HepG2 (cell line): ENCODE measurements at regions of chr14 and their contacts with region 1.

Region 1: DNA sequence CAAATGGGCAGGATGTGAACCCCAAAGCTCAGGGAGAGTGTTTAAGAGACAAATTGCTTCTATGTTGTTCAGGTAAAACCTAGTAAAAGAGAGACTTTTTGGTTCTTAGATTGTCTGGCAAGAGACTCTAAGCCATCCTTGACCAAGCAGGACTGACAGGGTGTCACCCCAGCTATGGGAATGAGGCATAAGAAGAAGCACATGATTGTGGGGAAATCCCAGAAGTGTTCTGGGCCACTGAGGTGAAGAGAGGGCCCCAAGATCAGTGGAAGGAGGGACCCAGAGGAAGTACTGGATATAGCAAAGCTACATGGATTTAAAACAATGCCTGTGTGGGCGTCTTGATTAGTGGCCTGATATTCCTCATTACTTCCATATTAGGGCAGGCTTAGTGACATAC is 99.0 kb downstream of the SAMD4A start:
- DNase-seq: no peak
- ATAC-seq: no peak
- H3K4me3 ChIP-seq: no peak overlapping the region
- H3K27ac ChIP-seq: no peak overlapping the region
- H3K4me1 ChIP-seq: peaks cover 66% of the 10 kb centered on the region
- H3K27me3 ChIP-seq: no peaks in the 10 kb centered on the region
- CTCF ChIP-seq: no peak
- EP300 ChIP-seq: no peak
- POLR2A ChIP-seq: no peak
- RAD21 ChIP-seq: no peak

Region 2: DNA sequence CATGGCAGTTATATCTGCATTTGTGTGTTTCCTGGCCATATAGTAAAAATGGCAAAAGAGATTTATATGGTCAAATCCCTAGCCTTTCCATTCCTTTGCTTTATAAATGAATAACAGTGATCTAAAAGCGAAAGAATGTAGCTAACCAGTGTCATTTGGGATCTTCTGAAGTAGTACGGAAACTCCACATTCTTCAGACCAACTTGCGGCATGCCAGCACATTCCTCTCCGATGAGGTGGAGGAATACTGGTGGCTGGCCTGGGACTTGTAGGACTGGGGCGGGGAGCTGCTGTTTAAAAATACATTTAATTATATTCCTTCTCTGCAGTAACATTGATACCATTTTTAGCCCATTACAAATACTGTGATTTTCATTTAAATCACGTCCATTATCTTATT is 13.8 kb before region 1 on chr14:
- CTCF ChIA-PET with region 1: no interaction called
- POLR2A ChIA-PET with region 1: no interaction called
- in situ Hi-C with region 1: no loop called
- intact Hi-C with region 1: loop called (anchors 1 kb)
- DNase-seq: peak; percentile 91
- ATAC-seq: peak; percentile 85
- H3K4me3 ChIP-seq: peak overlapping the region in 1 of 3 experiments; percentile 6; a peak in 1 of 6 replicates
- H3K27ac ChIP-seq: peak overlapping the region; percentile 82
- H3K4me1 ChIP-seq: peaks cover 99% of the 10 kb centered on the region
- H3K27me3 ChIP-seq: no peaks in the 10 kb centered on the region
- CTCF ChIP-seq: no peak
- EP300 ChIP-seq: peak in 1 of 2 experiments; percentile 76; a peak in 2 of 4 replicates
- POLR2A ChIP-seq: no peak
- RAD21 ChIP-seq: no peak